ENCODE measurements at regions of chr17 and their contacts with region 1.

Region 1: DNA sequence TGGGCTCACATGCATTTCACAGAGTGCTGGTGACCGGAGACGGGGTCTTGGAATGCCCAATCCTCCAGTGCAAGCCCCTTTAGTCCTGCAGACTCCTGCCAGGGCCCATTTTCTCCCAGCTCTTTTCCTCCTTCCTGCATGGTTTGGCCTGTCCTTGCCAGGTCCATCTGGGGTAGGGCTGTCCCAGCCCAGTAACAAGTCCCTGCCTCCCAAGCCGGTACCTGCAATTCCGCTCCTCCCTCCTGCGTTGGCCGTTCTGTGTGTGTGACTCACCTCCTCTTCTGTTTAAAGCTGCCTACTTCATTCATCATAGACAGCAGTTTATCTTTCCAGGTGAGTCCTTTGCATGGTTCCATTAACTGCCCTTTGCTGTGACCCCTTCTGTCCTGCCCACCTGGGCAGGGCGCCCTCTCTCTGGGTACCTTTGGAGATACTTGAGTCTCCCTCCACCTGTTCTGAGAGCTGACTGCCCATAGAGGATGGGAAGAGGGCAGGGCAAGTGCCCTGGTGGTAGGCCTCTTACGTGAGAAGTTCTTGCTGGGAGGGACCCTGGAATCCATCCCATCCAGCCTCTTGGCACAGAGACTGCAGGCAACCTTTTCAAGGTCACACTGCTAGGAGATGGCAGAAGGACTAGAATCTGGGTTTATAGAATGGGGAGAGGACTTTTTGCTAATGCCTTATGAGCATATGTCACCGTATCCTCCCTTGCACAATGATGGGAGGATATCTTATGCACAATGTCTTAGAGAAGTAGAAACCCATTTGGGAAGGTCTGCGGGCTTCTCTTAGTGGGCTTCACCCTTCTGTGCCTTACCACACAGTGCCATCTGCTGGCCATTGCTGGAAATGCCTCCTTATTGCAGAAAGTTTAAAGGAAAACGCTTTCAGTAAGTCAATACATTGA is 29.7 kb upstream of the LGALS9 start:
- DNase-seq: peak; percentile 89
- H3K4me3 Mint-ChIP-seq: no peak overlapping the region
- H3K27ac Mint-ChIP-seq: no peak overlapping the region
- H3K4me1 Mint-ChIP-seq: peaks cover 13% of the 10 kb centered on the region
- H3K27me3 Mint-ChIP-seq: no peaks in the 10 kb centered on the region

Region 2: DNA sequence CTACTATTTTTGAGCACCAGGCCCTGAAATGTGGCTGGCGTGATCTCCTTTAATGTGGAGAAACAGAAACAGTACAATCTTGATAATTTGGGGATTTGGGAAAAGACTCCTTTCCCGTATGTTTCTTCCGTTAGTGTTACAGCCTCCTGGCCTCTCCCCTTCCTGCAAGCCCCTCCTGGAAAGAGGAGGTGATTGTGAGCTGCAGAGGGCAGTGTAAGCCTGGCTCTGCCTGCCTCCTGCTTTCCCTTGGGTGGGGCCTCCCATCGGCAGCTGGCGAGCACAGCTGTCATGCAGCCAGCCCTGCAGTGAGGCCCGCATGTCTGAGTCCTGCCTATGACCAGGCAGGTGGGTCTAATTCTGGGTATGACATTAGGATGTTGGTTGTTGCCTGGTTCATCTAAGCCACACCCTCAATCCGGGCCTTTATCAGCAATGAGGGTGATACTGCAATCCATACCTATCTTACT is 356.1 kb before region 1 on chr17:
- CTCF ChIA-PET with region 1: interaction called, 90 read pairs
- DNase-seq: peak; percentile 57
- H3K4me3 Mint-ChIP-seq: no peak overlapping the region
- H3K27ac Mint-ChIP-seq: no peak overlapping the region
- H3K4me1 Mint-ChIP-seq: peaks cover 7% of the 10 kb centered on the region
- H3K27me3 Mint-ChIP-seq: peaks cover 47% of the 10 kb centered on the region

Region 3: DNA sequence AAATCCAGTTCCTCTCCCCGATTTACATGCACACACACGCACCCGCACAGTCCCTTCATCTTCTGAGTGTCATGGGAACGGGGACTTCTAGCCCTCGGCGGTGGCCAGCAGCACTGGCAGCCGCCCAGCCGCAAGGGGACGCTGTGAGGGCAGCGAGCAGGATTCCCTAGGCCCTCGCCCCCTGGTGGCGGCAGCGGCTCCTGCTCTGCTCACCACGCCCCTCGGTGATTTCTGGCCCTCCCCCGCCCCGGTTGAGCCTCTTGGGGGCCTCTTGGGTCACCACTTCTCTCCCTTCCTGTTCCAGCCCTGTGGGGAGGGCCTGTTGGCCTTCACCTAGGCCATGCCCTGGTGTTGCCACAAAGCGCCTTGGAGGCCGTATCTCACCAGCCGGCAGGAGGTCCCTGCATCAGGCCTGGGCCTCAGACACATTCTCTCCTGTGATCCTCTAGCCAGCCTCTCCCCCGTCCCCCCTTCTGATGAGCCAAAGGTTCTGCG is 220.3 kb before region 1 on chr17:
- CTCF ChIA-PET with region 1: interaction called, 131 read pairs
- DNase-seq: peak; percentile 85
- H3K4me3 Mint-ChIP-seq: no peak overlapping the region
- H3K27ac Mint-ChIP-seq: no peak overlapping the region
- H3K4me1 Mint-ChIP-seq: no peaks in the 10 kb centered on the region
- H3K27me3 Mint-ChIP-seq: peaks cover 65% of the 10 kb centered on the region

Region 4: GRCh38 chr17:27471321-27472269 is 129.7 kb before region 1 on chr17:
- CTCF ChIA-PET with region 1: interaction called, 10 read pairs
- DNase-seq: peak; percentile 84
- H3K4me3 Mint-ChIP-seq: peak overlapping the region; percentile 5
- H3K27ac Mint-ChIP-seq: peak overlapping the region; percentile 97
- H3K4me1 Mint-ChIP-seq: peaks cover 88% of the 10 kb centered on the region
- H3K27me3 Mint-ChIP-seq: no peaks in the 10 kb centered on the region

Region 5: GRCh38 chr17:27519550-27519949 is 81.8 kb before region 1 on chr17:
- CTCF ChIA-PET with region 1: no interaction called
- DNase-seq: no peak
- H3K4me3 Mint-ChIP-seq: no peak overlapping the region
- H3K27ac Mint-ChIP-seq: no peak overlapping the region
- H3K4me1 Mint-ChIP-seq: peaks cover 33% of the 10 kb centered on the region
- H3K27me3 Mint-ChIP-seq: no peaks in the 10 kb centered on the region

Region 6: DNA sequence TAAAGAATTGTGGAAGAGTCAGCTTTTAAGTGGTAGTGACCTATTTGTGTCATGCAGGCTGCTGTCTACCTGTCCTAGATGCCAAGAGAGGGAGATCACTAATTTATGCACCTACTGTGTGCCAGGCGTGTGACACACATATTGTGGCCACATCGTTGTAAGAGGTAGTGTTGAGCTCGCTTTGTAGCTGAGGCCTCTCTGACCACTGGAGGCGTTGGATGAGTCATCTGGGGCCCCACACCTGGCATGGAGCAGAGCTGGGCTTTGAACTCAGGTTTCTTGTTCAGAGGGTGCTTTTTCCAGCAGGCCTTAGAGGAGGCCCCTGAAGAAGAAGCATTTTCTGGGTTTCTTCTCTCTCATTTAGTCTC is 22.6 kb before region 1 on chr17:
- CTCF ChIA-PET with region 1: interaction called, 19 read pairs
- DNase-seq: peak; percentile 60
- H3K4me3 Mint-ChIP-seq: no peak overlapping the region
- H3K27ac Mint-ChIP-seq: peak overlapping the region; percentile 88
- H3K4me1 Mint-ChIP-seq: peaks cover 74% of the 10 kb centered on the region
- H3K27me3 Mint-ChIP-seq: no peaks in the 10 kb centered on the region

Region 7: GRCh38 chr17:27630607-27631410 is 29.5 kb after region 1 on chr17 and contains the start of gene LGALS9:
- CTCF ChIA-PET with region 1: interaction called, 17 read pairs
- DNase-seq: peak; percentile 67
- H3K4me3 Mint-ChIP-seq: peak within 1 kb of the TSS; percentile 89
- H3K27ac Mint-ChIP-seq: peak within 1 kb of the TSS; percentile 88
- H3K4me1 Mint-ChIP-seq: peaks cover 66% of the 10 kb centered on the region
- H3K27me3 Mint-ChIP-seq: no peaks in the 10 kb centered on the region

Measured in activated naive CD4-positive, alpha-beta T cell treated with anti-CD3 and anti-CD28 coated beads, Interleukin-2, amount 10 ng/mL, durations not matched to agents 7 days and 5 days (primary cell).